PC-3 (cell line): ENCODE measurements at regions of chr4 and their contacts with region 1.

Region 1: GRCh38 chr4:168917138-168917779 is 92.8 kb downstream of the CBR4 start:
- DNase-seq: peak; percentile 65
- ATAC-seq: peak; percentile 38; the same call in 1 of the 2 replicates
- H3K4me3 ChIP-seq: no peak overlapping the region
- H3K27ac ChIP-seq: no peak overlapping the region
- H3K4me1 ChIP-seq: no peaks in the 10 kb centered on the region
- H3K27me3 ChIP-seq: no peaks in the 10 kb centered on the region
- CTCF ChIP-seq: peak; percentile 56

Region 2: GRCh38 chr4:168514249-168514852 is 402.9 kb before region 1 on chr4:
- CTCF ChIA-PET with region 1: no interaction called
- POLR2A ChIA-PET with region 1: no interaction called
- intact Hi-C with region 1: loop called (anchors 2 kb)
- DNase-seq: peak; percentile 71
- ATAC-seq: no peak
- H3K4me3 ChIP-seq: no peak overlapping the region
- H3K27ac ChIP-seq: no peak overlapping the region
- H3K4me1 ChIP-seq: peaks cover 10% of the 10 kb centered on the region; the same call in 1 of the 2 replicates
- H3K27me3 ChIP-seq: no peaks in the 10 kb centered on the region
- CTCF ChIP-seq: peak; percentile 55

Region 3: GRCh38 chr4:168710353-168710946 is 206.8 kb before region 1 on chr4:
- CTCF ChIA-PET with region 1: interaction called, 4 read pairs
- POLR2A ChIA-PET with region 1: no interaction called
- intact Hi-C with region 1: loop called (anchors 1 kb)
- DNase-seq: peak; percentile 48
- ATAC-seq: no peak
- H3K4me3 ChIP-seq: no peak overlapping the region
- H3K27ac ChIP-seq: no peak overlapping the region
- H3K4me1 ChIP-seq: peaks cover 16% of the 10 kb centered on the region
- H3K27me3 ChIP-seq: no peaks in the 10 kb centered on the region
- CTCF ChIP-seq: peak; percentile 61

Region 4: GRCh38 chr4:169069972-169070902 is 153.0 kb after region 1 on chr4:
- CTCF ChIA-PET with region 1: no interaction called
- POLR2A ChIA-PET with region 1: no interaction called
- intact Hi-C with region 1: no loop called
- DNase-seq: peak; percentile 97
- ATAC-seq: peak; percentile 88
- H3K4me3 ChIP-seq: peak overlapping the region; percentile 47
- H3K27ac ChIP-seq: peak overlapping the region; percentile 99
- H3K4me1 ChIP-seq: peaks cover 32% of the 10 kb centered on the region
- H3K27me3 ChIP-seq: no peaks in the 10 kb centered on the region
- CTCF ChIP-seq: no peak

Region 5: DNA sequence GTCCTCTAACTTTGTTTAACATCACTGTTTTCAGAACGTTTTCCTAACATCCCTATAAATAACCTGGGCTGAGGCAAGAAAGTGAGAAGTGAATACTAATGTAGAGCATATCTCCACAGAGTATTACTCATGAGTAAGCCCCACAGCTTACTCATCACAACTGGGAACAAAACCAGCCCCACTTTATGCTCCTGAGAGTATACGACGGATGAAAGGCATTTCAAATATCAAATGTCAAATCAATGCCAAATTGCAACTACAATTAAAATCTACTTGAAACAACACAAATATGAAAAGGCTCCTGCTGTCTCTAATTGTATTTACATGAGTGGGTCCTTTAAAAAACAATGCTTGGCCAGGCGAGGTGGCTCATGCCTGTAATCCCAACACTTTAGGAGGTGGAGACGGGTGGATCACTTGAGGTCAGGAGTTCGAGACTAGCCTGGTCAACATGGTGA is 312.3 kb after region 1 on chr4:
- CTCF ChIA-PET with region 1: no interaction called
- POLR2A ChIA-PET with region 1: no interaction called
- intact Hi-C with region 1: no loop called
- DNase-seq: peak; percentile 89
- ATAC-seq: peak; percentile 72
- H3K4me3 ChIP-seq: no peak overlapping the region
- H3K27ac ChIP-seq: peak overlapping the region; percentile 73
- H3K4me1 ChIP-seq: peaks cover 57% of the 10 kb centered on the region
- H3K27me3 ChIP-seq: no peaks in the 10 kb centered on the region
- CTCF ChIP-seq: no peak